Right ventricle myocardium inferior (tissue), 1 donor: ENCODE measurements at regions of chr17 and their contacts with region 1.

Region 1: GRCh38 chr17:17757391-17757791 is 76.1 kb downstream of the RAI1 start:
- DNase-seq: no peak
- ATAC-seq: no peak

Region 2: DNA sequence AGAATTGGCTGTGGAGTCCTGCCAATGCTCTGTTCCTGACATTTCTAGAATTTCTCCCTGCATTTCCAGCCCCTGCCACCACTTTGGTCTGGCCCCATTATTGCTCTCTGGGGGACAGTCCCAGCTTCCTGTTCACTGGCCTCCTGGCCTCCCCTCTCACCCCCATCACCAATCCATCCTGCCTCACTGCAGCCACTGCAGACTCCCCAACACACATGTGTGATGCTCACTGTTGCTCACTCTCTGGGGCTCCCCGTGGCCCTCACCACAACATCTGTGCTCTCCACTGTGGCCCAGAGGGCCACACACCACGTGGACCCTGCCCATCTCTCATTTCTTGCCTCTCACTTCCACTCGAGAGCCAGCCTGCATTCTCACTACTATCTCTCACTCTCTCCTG is 14.8 kb after region 1 on chr17:
- intact Hi-C with region 1: loop called (anchors 2 kb)
- DNase-seq: no peak
- ATAC-seq: no peak